Breast epithelium (tissue), 4 donors: ENCODE measurements at regions of chr10 and their contacts with region 1.

Region 1: DNA sequence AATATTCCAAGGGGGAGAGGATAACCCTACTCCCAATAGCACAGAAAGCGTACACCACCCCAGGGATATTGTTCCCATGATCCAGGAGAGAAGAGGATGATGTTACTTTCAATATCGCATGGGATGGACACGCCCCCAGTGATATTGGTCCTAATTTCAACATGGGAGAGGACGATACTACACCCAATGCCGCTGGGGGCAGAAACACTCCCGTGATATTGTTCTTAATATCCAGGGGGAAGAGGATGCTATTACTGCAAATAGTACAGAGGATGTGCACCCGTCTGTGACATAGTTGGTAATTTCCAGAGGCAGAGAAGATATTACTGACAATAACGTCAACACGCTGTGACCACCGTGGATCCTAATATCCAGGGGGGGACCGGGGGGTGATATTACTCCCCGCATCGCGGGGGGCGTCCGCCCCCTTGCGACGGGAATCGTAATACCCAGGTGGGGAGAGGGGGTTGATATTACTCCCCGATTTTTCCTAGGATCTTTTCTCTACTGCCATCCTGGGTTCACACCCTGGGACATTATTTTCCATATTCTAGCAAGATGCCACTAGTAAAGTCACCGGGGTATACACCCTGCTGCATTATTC is 16.6 kb downstream of the MEIG1 start:
- DNase-seq: no peak
- H3K4me3 ChIP-seq: no peak overlapping the region
- H3K27ac ChIP-seq: no peak overlapping the region
- H3K4me1 ChIP-seq: no peaks in the 10 kb centered on the region
- H3K27me3 ChIP-seq: no peaks in the 10 kb centered on the region
- CTCF ChIP-seq: no peak
- POLR2A ChIP-seq: no peak

Region 2: DNA sequence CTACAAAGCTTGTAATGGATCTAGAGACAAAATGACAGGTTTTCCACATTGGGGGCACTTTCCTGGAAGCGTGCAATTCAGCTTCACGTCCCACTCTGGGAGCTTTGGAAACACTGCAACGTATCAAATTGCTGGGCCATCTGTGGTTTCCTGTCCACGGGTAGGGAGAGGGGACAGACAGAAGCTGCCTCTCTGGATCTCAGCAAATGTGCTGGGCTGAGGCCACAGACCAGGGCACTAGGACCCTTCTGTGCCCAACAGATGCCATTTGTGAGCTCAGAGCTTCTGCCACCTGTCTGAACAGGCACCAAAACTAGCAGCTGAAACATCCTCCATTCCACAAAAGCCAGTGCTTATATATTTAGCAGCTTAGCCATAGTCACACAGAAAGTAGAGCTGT is 604.2 kb before region 1 on chr10:
- intact Hi-C with region 1: no loop called
- DNase-seq: no peak
- H3K4me3 ChIP-seq: no peak overlapping the region
- H3K27ac ChIP-seq: no peak overlapping the region
- H3K4me1 ChIP-seq: no peaks in the 10 kb centered on the region
- H3K27me3 ChIP-seq: no peaks in the 10 kb centered on the region
- CTCF ChIP-seq: no peak
- POLR2A ChIP-seq: no peak

Region 3: GRCh38 chr10:14916600-14916999 is 59.2 kb before region 1 on chr10:
- intact Hi-C with region 1: no loop called
- DNase-seq: no peak
- H3K4me3 ChIP-seq: no peak overlapping the region
- H3K27ac ChIP-seq: no peak overlapping the region
- H3K4me1 ChIP-seq: no peaks in the 10 kb centered on the region
- H3K27me3 ChIP-seq: no peaks in the 10 kb centered on the region
- CTCF ChIP-seq: no peak
- POLR2A ChIP-seq: no peak

Region 4: DNA sequence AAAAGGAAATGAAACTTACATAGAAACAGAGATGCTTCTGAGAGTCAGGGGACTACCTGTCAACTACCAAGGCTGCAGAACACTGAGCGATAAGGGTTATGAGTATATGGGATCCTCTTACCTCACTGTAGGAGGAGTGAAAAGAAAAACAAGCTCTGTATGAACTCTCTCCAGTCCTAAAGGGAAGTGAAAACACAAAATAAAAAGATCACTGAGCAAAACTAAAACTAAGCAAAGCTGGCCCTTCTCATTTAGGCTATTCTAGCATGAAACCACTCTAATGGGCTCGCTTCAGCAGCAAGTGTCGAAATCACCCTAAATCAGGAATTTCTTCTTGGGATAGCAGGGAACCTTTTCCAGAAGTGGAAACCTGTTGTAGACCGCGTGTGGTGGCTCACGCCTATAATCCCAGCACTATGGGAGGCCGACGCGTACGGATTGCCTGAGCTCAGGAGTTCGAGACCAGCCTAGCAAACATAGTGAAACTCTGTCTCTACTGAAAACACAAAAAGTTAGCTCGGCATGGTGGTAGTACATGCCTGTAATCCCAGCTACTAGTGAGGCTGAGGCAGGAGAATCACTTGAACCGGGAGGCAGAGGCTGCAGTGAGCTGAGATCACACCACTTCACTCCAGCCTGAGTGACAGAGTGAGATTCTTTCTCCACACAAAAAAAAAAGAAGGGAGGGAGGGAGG is 48.9 kb before region 1 on chr10:
- intact Hi-C with region 1: loop called (anchors 2 kb)
- DNase-seq: no peak
- H3K4me3 ChIP-seq: no peak overlapping the region
- H3K27ac ChIP-seq: no peak overlapping the region
- H3K4me1 ChIP-seq: no peaks in the 10 kb centered on the region
- H3K27me3 ChIP-seq: no peaks in the 10 kb centered on the region
- CTCF ChIP-seq: no peak
- POLR2A ChIP-seq: no peak